GM13976 (cell line): ENCODE measurements at regions of chr6 and their contacts with region 1.

Region 1: GRCh38 chr6:122749451-122750050 is 30.0 kb upstream of the FABP7 start:
- DNase-seq: no peak
- CTCF ChIP-seq: no peak

Region 2: DNA sequence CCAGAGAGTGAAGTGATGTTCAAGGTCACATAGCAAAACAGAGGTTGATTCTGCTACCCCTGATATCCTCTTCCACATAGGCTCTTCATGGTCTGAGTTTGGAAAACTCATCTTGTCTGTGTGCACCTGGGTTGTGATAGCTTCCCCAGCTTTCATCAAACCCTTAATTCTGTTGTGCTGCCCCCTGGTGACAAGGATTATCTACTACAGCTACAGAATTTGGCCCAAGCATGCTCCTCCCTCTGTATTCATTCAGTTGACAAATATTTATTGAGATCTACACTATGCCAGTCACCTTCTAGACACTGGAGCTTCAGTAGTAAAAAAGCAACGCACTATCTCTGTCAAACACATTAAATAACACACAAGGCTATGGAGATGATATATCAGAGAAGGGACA is 89.9 kb after region 1 on chr6:
- in situ Hi-C with region 1: loop called (anchors 10 kb)
- DNase-seq: peak; percentile 65
- CTCF ChIP-seq: peak; percentile 49